CD4-positive, alpha-beta memory T cell (primary cell): ENCODE measurements at regions of chr17 and their contacts with region 1.

Region 1: DNA sequence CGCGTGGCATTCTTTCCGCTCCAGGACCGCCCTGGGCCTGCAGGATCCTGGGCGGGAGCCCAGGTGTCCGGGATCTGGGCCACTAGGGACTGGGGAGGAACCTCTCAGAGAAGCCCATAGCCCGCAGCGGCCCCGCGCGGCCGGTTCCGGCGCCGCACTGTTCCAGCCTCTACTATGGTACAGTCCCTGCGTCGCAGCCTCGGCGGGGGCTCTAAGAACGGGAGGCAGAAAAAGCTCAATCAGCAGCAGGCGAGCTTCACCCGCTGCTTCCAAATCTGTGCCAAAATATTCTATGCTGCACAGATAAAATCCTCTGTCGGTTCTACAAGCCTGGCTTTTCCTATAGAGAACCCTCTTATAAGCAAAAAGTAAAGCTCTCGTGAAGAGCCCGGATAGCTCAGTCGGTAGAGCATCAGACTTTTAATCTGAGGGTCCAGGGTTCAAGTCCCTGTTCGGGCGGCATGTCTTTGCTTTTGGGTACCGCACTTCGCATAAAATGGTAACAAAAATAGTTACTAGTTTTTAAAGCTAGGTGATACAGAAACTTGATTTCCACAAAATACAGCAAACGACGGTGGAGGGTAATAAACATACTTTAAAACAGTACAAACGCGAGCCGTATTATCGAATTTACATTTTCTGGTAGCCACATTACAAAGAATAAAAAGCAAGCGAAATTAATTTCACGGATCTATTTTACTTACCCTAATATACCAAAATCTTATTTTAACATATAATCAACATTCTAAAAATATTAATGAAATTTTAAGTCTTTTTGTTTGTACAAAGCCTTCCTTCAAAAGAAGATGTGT is 661 bp upstream of the ALOXE3 start:
- DNase-seq: peak; percentile 87 to 91 (median 88)
- H3K4me3 ChIP-seq: peak overlapping the region; percentile 69 to 97
- H3K4me3 Mint-ChIP-seq: peak overlapping the region; percentile 91 to 97 (median 94)
- H3K27ac ChIP-seq: peak overlapping the region; percentile 56
- H3K27ac Mint-ChIP-seq: peak overlapping the region; percentile 95 to 100 (median 98)
- H3K4me1 ChIP-seq: peaks cover 52% of the 10 kb centered on the region
- H3K4me1 Mint-ChIP-seq: peaks cover 34 to 63% (median 48%) of the 10 kb centered on the region in 4 donors
- H3K27me3 ChIP-seq: peaks cover 42% of the 10 kb centered on the region
- H3K27me3 Mint-ChIP-seq: peaks cover 27 to 59% of the 10 kb centered on the region in 2 donors

Region 2: GRCh38 chr17:8057691-8058114 is 61.3 kb before region 1 on chr17:
- CTCF ChIA-PET with region 1: interaction called, 24 read pairs
- POLR2A ChIA-PET with region 1: interaction called, 6 read pairs
- intact Hi-C with region 1: loop called (anchors 2 kb)
- DNase-seq: peak; percentile 63 to 74 (median 69)
- H3K4me3 ChIP-seq: no peak overlapping the region
- H3K4me3 Mint-ChIP-seq: no peak overlapping the region
- H3K27ac ChIP-seq: no peak overlapping the region
- H3K27ac Mint-ChIP-seq: no peak overlapping the region
- H3K4me1 ChIP-seq: peaks cover 7% of the 10 kb centered on the region
- H3K4me1 Mint-ChIP-seq: peaks cover 1 to 16% (median 3%) of the 10 kb centered on the region in 4 donors
- H3K27me3 ChIP-seq: peaks cover 27% of the 10 kb centered on the region
- H3K27me3 Mint-ChIP-seq: peaks cover 31 to 32% of the 10 kb centered on the region in 2 donors

Region 3: DNA sequence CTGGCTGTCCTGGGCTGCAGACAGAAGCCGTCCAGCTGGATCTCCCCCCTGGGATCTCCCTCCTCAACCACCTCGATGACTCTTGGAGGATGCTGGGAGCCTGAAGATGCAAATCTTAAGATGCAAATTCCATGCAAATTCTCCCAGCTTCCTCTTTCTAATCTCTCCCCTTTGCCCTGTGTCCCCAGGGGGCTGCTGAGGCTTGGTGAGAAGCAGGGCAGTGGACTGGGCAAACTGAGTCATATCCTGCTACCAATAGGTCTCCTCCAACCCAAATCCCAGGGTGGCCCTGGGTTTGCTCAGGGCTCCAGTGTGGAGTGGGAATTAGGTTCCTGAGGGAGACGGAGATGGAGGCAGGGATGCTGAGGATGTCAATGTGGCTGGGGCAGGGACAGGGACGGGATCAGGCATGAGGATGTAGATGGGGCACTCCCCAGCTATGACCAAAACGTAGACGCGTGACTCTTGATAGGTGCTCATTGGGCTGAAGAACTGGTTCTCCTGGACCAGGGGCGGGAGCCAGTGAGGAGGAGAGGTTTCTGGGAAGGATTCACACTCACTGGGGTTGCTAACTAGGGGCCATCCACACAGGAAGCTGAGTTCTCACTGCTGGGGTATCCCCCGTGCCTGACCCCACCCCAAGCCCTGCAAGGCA is 27.8 kb before region 1 on chr17:
- CTCF ChIA-PET with region 1: interaction called, 89 read pairs
- POLR2A ChIA-PET with region 1: interaction called, 25 read pairs
- intact Hi-C with region 1: loop called (anchors 1 kb)
- DNase-seq: no peak
- H3K4me3 ChIP-seq: no peak overlapping the region
- H3K4me3 Mint-ChIP-seq: peak overlapping the region in 1 of 8 donors; percentile 26
- H3K27ac ChIP-seq: no peak overlapping the region
- H3K27ac Mint-ChIP-seq: no peak overlapping the region
- H3K4me1 ChIP-seq: peaks cover 12% of the 10 kb centered on the region
- H3K4me1 Mint-ChIP-seq: peaks cover 5 to 16% (median 12%) of the 10 kb centered on the region in 4 donors
- H3K27me3 ChIP-seq: no peaks in the 10 kb centered on the region
- H3K27me3 Mint-ChIP-seq: peaks cover 17 to 21% of the 10 kb centered on the region in 2 donors

Region 4: DNA sequence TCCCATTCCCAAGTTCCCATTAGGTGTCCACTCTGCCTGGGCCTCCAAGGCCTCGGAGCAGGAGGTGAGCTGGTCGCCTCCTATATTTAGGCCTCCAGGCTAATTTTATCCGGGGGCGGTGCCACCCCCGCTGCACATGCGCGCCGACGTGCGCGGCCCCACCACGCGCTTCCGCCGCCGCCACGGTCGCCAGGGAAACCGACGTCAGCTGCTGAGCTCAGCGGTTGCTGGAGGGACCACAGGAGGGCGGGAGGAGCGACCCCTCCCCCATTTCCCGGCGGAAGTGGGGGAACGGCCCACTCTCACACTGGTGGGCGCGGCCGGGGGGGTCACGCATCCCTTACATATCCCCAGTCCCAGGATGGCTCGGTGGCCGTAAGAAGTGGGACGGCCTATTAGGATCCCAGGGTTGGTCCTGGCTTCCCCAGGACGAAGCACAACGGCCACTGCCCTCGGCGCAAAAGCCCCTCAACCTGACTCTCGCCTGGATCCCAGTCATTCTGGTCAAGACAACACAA is 32.2 kb after region 1 on chr17:
- CTCF ChIA-PET with region 1: interaction called, 38 read pairs
- POLR2A ChIA-PET with region 1: interaction called, 83 read pairs
- intact Hi-C with region 1: loop called (anchors 1 kb)
- DNase-seq: peak; percentile 92 to 96 (median 94)
- H3K4me3 ChIP-seq: peak overlapping the region; percentile 74 to 89
- H3K4me3 Mint-ChIP-seq: peak overlapping the region in 7 of 8 donors; percentile 91 to 98 (median 93)
- H3K27ac ChIP-seq: peak overlapping the region; percentile 100
- H3K27ac Mint-ChIP-seq: no peak overlapping the region
- H3K4me1 ChIP-seq: peaks cover 54% of the 10 kb centered on the region
- H3K4me1 Mint-ChIP-seq: peaks cover 30 to 58% (median 39%) of the 10 kb centered on the region in 4 donors
- H3K27me3 ChIP-seq: no peaks in the 10 kb centered on the region
- H3K27me3 Mint-ChIP-seq: no peaks in the 10 kb centered on the region

Region 5: DNA sequence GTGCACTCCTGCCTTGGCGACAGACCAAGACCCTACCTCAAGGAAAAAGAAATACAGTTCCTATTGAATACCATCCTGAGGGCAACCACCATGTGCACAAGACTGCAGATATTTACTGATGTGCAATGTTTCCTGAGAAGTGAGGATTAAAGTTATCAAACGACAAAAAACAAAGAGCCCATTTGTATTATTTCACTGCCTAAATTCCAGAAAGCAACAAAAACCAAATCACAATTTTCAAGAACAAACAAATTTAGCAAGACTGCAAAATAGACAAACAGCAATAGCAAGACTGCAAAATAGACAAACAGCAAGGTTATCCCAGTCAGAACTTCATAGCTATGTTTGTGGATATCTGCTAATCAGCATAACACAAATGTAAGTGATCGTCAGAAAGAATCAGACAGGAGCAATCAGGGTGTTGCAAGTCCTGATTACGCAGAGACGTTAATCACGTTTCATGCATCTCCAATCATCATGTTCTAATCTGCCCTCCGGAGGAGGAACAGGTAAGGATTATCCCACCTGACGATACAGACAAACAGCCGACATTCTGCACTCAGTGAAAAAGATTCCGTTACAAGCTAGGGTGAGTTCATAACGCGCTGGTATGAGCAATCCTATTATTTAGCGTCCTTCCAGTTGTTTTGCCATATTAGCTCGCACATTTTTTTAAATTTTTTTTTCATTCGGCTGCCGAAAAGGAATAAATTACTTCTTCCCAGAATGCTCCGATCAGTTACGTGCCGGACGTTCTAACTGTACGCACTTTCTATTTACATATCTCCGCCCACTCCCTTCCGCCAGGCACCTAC is 54.3 kb after region 1 on chr17:
- CTCF ChIA-PET with region 1: interaction called, 6 read pairs
- POLR2A ChIA-PET with region 1: interaction called, 26 read pairs
- intact Hi-C with region 1: no loop called
- DNase-seq: peak; percentile 91 to 94 (median 92)
- H3K4me3 ChIP-seq: peak overlapping the region; percentile 12 to 52
- H3K4me3 Mint-ChIP-seq: peak overlapping the region; percentile 84 to 94 (median 90)
- H3K27ac ChIP-seq: peak overlapping the region; percentile 99
- H3K27ac Mint-ChIP-seq: peak overlapping the region; percentile 98 to 100 (median 100)
- H3K4me1 ChIP-seq: peaks cover 45% of the 10 kb centered on the region
- H3K4me1 Mint-ChIP-seq: peaks cover 30 to 61% (median 43%) of the 10 kb centered on the region in 4 donors
- H3K27me3 ChIP-seq: no peaks in the 10 kb centered on the region
- H3K27me3 Mint-ChIP-seq: no peaks in the 10 kb centered on the region

Region 6: DNA sequence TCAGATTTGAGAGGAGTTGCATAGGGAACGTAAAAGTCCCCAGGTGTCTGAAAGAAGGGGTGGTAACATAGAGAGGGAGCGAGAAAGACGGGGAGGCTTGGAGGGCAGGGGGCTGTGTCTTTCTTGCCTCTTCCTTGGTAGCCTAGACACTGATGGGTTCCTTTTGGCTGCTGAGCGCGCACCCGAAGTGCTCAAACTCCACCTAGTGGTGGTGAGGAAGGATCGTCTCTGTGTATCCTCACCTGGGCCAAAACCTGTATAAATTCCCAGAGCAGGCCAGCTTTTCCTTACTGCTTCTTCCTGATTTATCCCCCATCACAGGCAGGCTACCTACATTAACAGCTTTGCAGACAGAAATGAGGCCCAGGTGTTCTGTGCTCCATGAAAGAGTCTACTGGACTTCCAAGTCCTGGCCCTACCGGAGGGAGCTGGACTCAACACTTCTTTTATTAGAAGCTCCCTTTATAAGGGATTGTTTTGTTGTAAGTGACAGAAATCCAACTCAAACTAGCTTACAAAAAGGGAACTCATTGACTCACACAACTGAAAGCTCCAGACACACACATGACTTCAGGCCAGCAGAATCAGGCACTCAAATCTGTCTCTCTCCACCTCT is 181.8 kb after region 1 on chr17:
- CTCF ChIA-PET with region 1: interaction called, 23 read pairs
- POLR2A ChIA-PET with region 1: interaction called, 20 read pairs
- intact Hi-C with region 1: loop called (anchors 1 kb)
- DNase-seq: peak; percentile 62 to 76 (median 72)
- H3K4me3 ChIP-seq: no peak overlapping the region
- H3K4me3 Mint-ChIP-seq: peak overlapping the region in 2 of 8 donors; percentile 2
- H3K27ac ChIP-seq: no peak overlapping the region
- H3K27ac Mint-ChIP-seq: peak overlapping the region in 6 of 7 donors; percentile 47 to 90 (median 83)
- H3K4me1 ChIP-seq: peaks cover 7% of the 10 kb centered on the region
- H3K4me1 Mint-ChIP-seq: peaks cover 7 to 16% (median 11%) of the 10 kb centered on the region in 4 donors
- H3K27me3 ChIP-seq: no peaks in the 10 kb centered on the region
- H3K27me3 Mint-ChIP-seq: peaks cover 0 to 1% of the 10 kb centered on the region in 2 donors